ENCODE measurements at regions of chr2 and their contacts with region 1.

Region 1: DNA sequence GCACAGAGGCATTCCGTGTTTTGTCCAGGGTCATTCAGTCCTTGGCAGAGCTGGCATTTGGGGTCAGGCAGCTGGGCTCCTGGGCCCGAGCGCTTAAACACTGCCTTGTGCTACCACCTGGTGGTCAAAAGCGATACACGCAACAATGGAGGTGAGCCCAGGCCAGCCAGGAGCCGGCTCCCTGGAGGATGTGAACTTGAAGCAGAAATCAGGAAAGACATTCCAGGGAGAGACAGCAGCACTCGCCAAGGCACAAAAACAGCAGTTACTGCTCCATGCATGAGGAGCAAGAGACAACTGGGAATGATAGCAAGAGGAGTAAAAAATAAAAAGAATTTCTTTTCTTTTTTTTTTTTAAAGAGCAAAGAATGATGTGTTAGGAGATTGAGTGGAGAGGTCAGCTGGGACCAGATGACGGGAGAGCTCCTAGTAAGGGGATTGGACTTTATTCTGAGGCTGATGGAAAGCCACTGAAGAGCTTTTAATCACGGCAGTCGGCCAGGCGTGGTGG is 20.7 kb downstream of the SCYGR8 start:
- DNase-seq: peak; percentile 66 to 84 (median 81)
- ATAC-seq: peak; percentile 85 to 99 (median 97)
- H3K4me3 ChIP-seq: no peak overlapping the region
- H3K27ac ChIP-seq: peak overlapping the region in 2 of 12 donors; percentile 4 to 42
- H3K4me1 ChIP-seq: peaks cover 0 to 10% (median 5%) of the 10 kb centered on the region in 12 donors
- H3K27me3 ChIP-seq: no peaks in the 10 kb centered on the region
- CTCF ChIP-seq: peak; percentile 71 to 91 (median 87)
- POLR2A ChIP-seq: no peak

Region 2: GRCh38 chr2:227132986-227133385 is 633.4 kb before region 1 on chr2:
- intact Hi-C with region 1: loop called in 1 of 10 experiments (anchors 10 kb)
- DNase-seq: no peak
- ATAC-seq: peak in 2 of 4 donors; percentile 19 to 33
- H3K4me3 ChIP-seq: no peak overlapping the region
- H3K27ac ChIP-seq: no peak overlapping the region
- H3K4me1 ChIP-seq: peaks cover 0 to 4% (median 0%) of the 10 kb centered on the region in 12 donors
- H3K27me3 ChIP-seq: peaks cover 0 to 3% (median 0%) of the 10 kb centered on the region in 9 donors
- CTCF ChIP-seq: no peak
- POLR2A ChIP-seq: no peak

Region 3: DNA sequence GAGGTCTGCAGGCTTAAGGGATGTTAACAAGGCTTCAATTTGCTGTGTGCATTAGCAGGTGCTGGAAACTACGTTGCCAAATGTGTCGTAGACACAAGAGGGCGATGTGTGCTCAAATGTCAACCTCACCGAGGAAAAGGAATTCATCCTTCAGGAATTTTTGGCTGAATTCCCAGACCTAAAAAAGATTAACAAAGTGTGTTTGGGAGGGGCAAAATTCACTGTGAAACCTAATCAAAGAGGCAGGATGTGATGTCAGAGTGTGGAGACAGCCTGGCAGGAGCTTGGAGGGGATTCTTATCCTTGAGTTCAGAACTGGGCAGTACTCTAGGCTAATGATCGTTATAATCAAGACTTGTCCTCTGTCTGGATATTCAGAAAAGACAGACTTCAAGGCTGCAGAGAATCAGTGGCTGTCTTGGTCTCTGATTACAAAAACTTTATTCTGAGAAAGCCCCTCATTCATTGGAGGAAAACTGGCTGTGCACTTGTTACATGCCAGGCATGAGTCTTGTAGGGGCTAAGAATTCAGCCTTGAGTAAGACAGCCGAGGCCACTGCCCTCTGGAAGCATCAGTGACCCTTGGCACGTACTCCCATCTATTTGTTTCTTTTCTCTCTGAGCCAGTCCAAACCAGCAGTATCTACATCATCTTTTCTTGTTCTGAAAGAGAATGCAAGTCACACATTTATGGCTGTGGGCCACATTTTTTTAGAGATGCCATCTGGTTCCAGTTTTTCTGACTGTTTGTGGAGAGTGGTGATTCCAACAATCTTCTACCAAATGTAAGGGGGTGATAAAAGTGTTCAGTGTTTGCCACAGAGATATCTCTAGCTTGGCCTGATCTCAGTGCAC is 360.0 kb before region 1 on chr2:
- intact Hi-C with region 1: loop called (anchors 1 to 5 kb)
- DNase-seq: peak in 4 of 5 donors; percentile 66 to 72 (median 68)
- ATAC-seq: peak; percentile 79 to 91 (median 88)
- H3K4me3 ChIP-seq: no peak overlapping the region
- H3K27ac ChIP-seq: peak overlapping the region; percentile 9 to 87 (median 64)
- H3K4me1 ChIP-seq: peaks cover 0 to 39% (median 12%) of the 10 kb centered on the region in 12 donors
- H3K27me3 ChIP-seq: no peaks in the 10 kb centered on the region
- CTCF ChIP-seq: peak; percentile 48 to 84 (median 73)
- POLR2A ChIP-seq: no peak

Region 4: GRCh38 chr2:227479865-227480475 is 286.5 kb before region 1 on chr2:
- intact Hi-C with region 1: loop called in 2 of 10 experiments (anchors 5 to 10 kb)
- DNase-seq: no peak
- ATAC-seq: peak in 3 of 4 donors; percentile 46 to 76 (median 53)
- H3K4me3 ChIP-seq: no peak overlapping the region
- H3K27ac ChIP-seq: no peak overlapping the region
- H3K4me1 ChIP-seq: peaks cover 0 to 71% (median 25%) of the 10 kb centered on the region in 12 donors
- H3K27me3 ChIP-seq: no peaks in the 10 kb centered on the region
- CTCF ChIP-seq: peak in 10 of 12 donors; percentile 15 to 54 (median 42)
- POLR2A ChIP-seq: no peak

Region 5: GRCh38 chr2:227655454-227655853 is 111.0 kb before region 1 on chr2:
- intact Hi-C with region 1: loop called in 9 of 10 experiments (anchors 1 to 5 kb)
- DNase-seq: no peak
- ATAC-seq: peak in 3 of 4 donors; percentile 67 to 91 (median 85)
- H3K4me3 ChIP-seq: no peak overlapping the region
- H3K27ac ChIP-seq: peak overlapping the region in 2 of 12 donors; percentile 20 to 49
- H3K4me1 ChIP-seq: peaks cover 0 to 6% (median 0%) of the 10 kb centered on the region in 12 donors
- H3K27me3 ChIP-seq: no peaks in the 10 kb centered on the region
- CTCF ChIP-seq: no peak
- POLR2A ChIP-seq: no peak

Region 6: GRCh38 chr2:227661019-227661649 is 105.3 kb before region 1 on chr2:
- intact Hi-C with region 1: loop called in 9 of 10 experiments (anchors 1 to 5 kb)
- DNase-seq: peak in 1 of 5 donors; percentile 7
- ATAC-seq: peak in 1 of 4 donors; percentile 61
- H3K4me3 ChIP-seq: no peak overlapping the region
- H3K27ac ChIP-seq: no peak overlapping the region
- H3K4me1 ChIP-seq: peaks cover 0 to 7% (median 0%) of the 10 kb centered on the region in 12 donors
- H3K27me3 ChIP-seq: no peaks in the 10 kb centered on the region
- CTCF ChIP-seq: no peak
- POLR2A ChIP-seq: no peak